AG04449 (cell line): ENCODE measurements at regions of chr11 and their contacts with region 1.

Region 1: DNA sequence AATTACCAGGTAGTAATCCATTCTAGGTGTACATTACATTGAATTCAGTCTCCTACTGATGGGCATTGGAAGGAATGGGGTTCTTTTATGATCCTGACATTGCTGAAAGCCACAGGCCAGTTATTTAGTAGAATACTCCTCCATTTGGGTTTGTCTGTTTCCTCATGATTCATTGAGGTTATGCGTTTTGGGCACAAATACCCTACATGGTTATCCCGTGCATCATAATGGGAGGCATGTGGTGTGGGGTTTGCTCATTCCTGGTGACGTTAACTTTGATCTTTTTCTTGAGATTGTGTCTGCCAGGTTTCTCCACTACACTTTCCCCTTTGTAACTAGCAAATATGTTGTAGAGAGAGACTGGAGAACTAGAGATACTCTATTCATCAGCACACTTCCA is 5.5 kb downstream of the FOLR3 start:
- DNase-seq: peak; percentile 82
- H3K4me3 ChIP-seq: no peak overlapping the region
- CTCF ChIP-seq: no peak

Region 2: GRCh38 chr11:71908218-71908617 is 232.8 kb before region 1 on chr11:
- CTCF ChIA-PET with region 1: no interaction called
- POLR2A ChIA-PET with region 1: no interaction called
- DNase-seq: no peak
- H3K4me3 ChIP-seq: no peak overlapping the region
- CTCF ChIP-seq: no peak

Region 3: DNA sequence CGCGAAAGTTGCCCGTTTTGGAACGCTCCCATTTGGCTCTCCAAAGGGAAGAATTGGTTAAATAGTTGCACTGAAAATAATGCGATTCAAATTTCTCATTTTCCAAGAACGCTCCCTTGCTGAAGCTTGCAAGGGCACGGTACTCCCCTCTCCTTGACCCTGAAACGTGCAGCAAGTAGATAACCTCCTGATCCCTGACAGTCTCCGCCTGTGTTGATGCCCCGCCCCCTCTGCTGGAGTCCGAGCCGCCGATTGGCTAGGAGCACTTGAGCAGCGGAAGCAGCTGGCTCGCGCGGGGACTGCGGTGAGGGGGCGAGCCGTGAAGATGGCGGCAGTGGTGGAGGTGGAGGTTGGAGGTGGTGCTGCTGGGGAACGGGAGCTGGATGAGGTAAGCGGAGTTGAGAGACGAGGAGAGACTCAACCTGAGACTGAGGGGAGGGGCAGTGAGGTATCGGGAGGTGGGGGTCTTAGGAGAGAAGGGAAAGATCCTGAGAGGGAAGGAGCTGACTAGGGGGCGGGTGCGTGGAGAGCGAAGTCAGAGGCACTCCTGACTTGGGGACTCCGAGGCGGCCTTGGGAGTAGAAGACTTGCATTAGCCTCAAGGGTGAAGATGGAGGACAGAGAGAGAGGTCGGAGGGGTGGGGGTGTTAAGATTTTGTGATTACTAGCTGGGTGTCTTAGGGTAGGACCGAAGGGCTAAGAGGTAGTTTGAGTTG is 212.2 kb before region 1 on chr11 and contains the start of gene RNF121:
- CTCF ChIA-PET with region 1: no interaction called
- POLR2A ChIA-PET with region 1: no interaction called
- DNase-seq: no peak
- H3K4me3 ChIP-seq: peak within 1 kb of the TSS; percentile 98
- CTCF ChIP-seq: no peak

Region 4: GRCh38 chr11:72015511-72016171 is 125.4 kb before region 1 on chr11:
- CTCF ChIA-PET with region 1: interaction called, 15 read pairs
- POLR2A ChIA-PET with region 1: no interaction called
- DNase-seq: no peak
- H3K4me3 ChIP-seq: no peak overlapping the region
- CTCF ChIP-seq: peak; percentile 58

Region 5: DNA sequence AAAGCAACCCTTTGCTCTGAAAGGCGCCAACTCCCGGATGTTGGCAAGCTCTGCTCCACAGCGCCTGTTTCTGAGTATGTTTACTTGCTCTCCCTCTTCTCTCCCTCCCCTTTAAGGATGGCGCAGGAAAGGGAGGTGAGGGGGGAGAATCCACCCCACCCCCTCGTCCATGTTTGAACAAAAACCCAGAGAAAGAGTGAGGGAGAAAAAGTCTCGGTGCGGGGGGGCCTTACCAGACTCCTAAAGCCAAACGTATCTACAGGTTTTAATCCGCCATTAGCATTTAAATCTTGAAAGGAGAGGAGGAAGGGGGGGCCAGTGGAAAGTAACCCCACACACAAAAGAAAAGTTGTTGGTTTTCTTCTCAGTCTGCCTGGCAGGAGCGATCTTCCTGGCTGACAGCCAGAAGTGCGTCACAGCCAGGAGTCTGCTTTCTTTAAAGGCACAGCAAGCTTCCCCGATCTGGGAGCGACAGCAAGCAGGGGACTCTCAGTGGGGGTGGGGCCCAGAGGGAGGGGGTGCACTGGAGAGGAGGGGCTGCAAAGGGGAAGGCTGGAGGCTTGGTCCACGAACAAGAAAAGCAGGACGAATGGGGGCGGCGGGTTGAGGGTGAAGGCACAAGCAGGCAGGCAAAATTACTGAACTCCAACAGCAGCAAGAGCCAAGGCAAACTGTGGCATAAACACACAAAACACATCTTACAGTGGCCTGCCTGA is 100.2 kb before region 1 on chr11:
- CTCF ChIA-PET with region 1: interaction called, 15 read pairs
- POLR2A ChIA-PET with region 1: no interaction called
- DNase-seq: peak; percentile 77
- H3K4me3 ChIP-seq: peak overlapping the region; percentile 63
- CTCF ChIP-seq: no peak

Region 6: DNA sequence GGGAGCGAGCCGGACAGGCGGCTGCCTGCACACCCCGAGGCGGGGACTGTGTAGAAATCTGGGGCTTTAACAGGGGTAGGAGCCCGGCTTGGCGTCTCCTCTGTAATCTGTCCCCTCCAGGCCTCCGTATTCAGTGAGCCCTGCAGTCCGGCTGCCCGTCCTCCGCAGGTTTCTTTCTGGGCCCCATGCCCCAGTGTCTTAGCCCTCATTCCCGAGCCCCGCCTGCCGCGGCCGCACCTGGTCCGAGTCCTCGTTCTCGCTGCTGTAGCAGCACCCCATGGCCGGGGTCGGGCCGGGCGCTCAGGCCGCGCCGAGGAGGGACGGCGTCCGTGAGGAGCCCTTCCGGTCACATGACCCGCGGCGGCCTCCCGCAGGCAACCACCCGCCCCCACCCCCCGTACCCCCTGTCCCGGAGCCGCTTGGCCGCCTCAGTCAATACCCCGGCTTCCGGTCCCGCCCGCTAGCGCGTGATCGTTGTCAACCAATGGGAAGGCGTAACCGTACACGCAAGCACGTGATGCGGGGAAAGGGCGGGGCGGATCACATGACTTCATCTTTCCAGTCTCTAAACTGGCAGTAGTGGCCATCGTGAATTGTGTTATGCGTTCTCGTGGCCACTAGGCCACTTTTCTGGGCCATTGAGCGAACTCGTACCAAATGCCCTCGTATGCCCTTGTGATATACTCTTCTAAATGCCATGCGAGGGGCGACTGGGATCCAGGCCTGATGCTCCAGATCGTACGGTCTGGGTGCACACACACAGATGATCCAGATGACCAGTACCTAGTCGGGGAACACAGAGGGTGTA is 37.9 kb before region 1 on chr11 and contains the start of gene LAMTOR1:
- CTCF ChIA-PET with region 1: interaction called, 17 read pairs
- POLR2A ChIA-PET with region 1: interaction called, 7 read pairs
- DNase-seq: peak; percentile 91
- H3K4me3 ChIP-seq: peak within 1 kb of the TSS; percentile 78
- CTCF ChIP-seq: peak; percentile 40

Region 7: GRCh38 chr11:72123117-72123653 is 17.9 kb before region 1 on chr11:
- CTCF ChIA-PET with region 1: interaction called, 13 read pairs
- POLR2A ChIA-PET with region 1: no interaction called
- DNase-seq: no peak
- H3K4me3 ChIP-seq: no peak overlapping the region
- CTCF ChIP-seq: no peak

Region 8: GRCh38 chr11:72154816-72155215 is 13.8 kb after region 1 on chr11:
- CTCF ChIA-PET with region 1: interaction called, 23 read pairs
- POLR2A ChIA-PET with region 1: no interaction called
- DNase-seq: no peak
- H3K4me3 ChIP-seq: no peak overlapping the region
- CTCF ChIP-seq: no peak

Region 9: GRCh38 chr11:72189461-72190275 is 48.6 kb after region 1 on chr11:
- CTCF ChIA-PET with region 1: interaction called, 32 read pairs
- POLR2A ChIA-PET with region 1: no interaction called
- DNase-seq: no peak
- H3K4me3 ChIP-seq: no peak overlapping the region
- CTCF ChIP-seq: no peak

Region 10: DNA sequence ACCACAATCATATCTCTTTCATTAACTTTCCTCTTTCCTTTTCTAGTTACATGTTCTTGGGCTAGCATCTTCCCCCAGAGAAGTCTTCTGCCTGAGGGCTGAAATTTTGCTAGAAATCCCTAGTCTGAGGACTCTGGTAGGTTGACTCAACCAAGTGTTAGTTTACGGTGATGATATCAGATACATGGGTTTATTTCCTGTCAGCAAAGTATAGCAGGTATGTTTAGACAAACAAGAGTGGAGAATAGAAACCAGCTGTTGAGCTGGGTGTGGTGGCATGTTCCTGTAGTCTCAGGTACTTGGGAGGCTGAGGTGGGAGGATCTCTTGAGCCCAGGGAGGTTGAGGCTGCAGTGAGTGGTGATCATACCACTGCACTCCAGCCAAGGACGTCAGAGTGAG is 62.1 kb after region 1 on chr11:
- CTCF ChIA-PET with region 1: no interaction called
- POLR2A ChIA-PET with region 1: no interaction called
- DNase-seq: no peak
- H3K4me3 ChIP-seq: no peak overlapping the region
- CTCF ChIP-seq: no peak

Region 11: GRCh38 chr11:72265951-72266350 is 124.9 kb after region 1 on chr11:
- CTCF ChIA-PET with region 1: no interaction called
- POLR2A ChIA-PET with region 1: no interaction called
- DNase-seq: no peak
- H3K4me3 ChIP-seq: no peak overlapping the region
- CTCF ChIP-seq: no peak